Activated naive CD4-positive, alpha-beta T cell treated with anti-CD3 and anti-CD28 coated beads for 36 hours (primary cell): ENCODE measurements at regions of chr4 and their contacts with region 1.

Region 1: GRCh38 chr4:187606581-187606980 is 389.0 kb upstream of the ZFP42 start:
- DNase-seq: peak; percentile 23
- H3K4me3 Mint-ChIP-seq: no peak overlapping the region
- H3K27ac Mint-ChIP-seq: no peak overlapping the region
- H3K4me1 Mint-ChIP-seq: no peaks in the 10 kb centered on the region
- H3K27me3 Mint-ChIP-seq: peaks cover 4% of the 10 kb centered on the region

Region 2: DNA sequence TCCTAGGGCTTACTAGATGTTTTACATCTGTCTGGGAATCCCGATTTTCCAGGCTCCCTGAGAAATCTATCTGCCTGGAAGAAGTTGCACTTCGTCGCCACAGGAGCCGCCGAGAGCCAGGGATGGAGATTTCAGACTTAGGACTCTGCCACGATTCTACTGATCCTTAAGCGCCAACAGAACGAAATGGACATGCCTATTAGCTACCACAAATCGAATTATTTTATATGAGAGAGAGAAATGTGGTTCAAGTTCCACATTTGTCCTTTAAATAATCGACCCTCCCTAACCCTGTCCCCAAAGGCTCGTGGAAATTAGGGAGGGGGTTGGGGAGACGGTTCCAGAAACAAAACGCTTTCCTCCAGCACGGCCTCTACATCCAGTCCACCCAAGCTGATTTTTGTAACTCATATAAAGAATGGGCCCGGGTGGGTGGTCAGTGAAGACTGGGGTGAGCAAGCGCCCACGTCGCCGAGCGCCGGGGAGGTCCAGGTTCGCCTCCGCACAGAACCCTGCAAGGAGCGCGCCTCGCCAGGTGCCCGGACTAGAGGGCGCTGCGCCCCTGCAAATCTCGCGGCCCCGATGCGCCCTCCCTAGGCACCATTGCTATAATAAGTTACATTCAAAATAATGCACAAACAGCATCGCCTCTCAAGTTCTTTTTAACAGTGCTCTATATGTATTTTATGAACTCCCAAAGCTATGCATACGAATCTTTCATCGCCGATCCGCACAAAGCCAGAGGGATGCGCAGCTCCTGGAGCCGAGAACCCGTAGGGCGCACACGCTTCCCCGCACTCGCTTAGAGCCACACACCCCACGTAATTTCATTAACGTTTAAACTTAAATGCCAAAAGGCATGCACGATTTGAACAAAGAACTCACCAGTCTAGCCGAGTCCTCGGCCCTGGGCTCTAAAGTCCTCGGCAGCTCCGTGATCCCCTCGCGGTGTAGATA is 880.8 kb before region 1 on chr4:
- CTCF ChIA-PET with region 1: no interaction called
- intact Hi-C with region 1: loop called (anchors 10 kb)
- DNase-seq: peak; percentile 48
- H3K4me3 Mint-ChIP-seq: peak overlapping the region; percentile 48
- H3K27ac Mint-ChIP-seq: no peak overlapping the region
- H3K4me1 Mint-ChIP-seq: peaks cover 21% of the 10 kb centered on the region
- H3K27me3 Mint-ChIP-seq: peaks cover 60% of the 10 kb centered on the region

Region 3: DNA sequence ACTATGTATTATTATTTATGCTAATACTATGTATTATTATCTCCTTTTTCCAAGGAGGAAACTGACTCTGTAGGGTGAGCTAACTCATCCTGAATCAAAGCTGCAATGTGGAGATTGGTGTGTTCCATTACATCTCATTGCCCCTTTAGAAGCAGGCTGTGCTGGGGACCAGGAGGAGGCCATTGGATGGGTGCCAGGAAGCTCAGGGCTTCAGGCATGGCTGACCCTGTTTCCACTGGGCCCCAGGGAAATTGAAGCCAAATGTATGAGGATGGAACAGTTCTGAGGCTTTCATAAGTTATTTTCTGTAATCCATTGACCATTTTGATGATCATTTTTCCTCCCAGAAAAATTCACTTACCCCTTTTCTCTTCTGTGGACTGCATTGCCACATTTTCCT is 29.8 kb before region 1 on chr4:
- CTCF ChIA-PET with region 1: no interaction called
- intact Hi-C with region 1: no loop called
- DNase-seq: no peak
- H3K4me3 Mint-ChIP-seq: no peak overlapping the region
- H3K27ac Mint-ChIP-seq: no peak overlapping the region
- H3K4me1 Mint-ChIP-seq: no peaks in the 10 kb centered on the region
- H3K27me3 Mint-ChIP-seq: no peaks in the 10 kb centered on the region

Region 4: GRCh38 chr4:187849556-187850225 is 243.1 kb after region 1 on chr4:
- CTCF ChIA-PET with region 1: no interaction called
- intact Hi-C with region 1: no loop called
- DNase-seq: no peak
- H3K4me3 Mint-ChIP-seq: no peak overlapping the region
- H3K27ac Mint-ChIP-seq: no peak overlapping the region
- H3K4me1 Mint-ChIP-seq: no peaks in the 10 kb centered on the region
- H3K27me3 Mint-ChIP-seq: no peaks in the 10 kb centered on the region

Region 5: DNA sequence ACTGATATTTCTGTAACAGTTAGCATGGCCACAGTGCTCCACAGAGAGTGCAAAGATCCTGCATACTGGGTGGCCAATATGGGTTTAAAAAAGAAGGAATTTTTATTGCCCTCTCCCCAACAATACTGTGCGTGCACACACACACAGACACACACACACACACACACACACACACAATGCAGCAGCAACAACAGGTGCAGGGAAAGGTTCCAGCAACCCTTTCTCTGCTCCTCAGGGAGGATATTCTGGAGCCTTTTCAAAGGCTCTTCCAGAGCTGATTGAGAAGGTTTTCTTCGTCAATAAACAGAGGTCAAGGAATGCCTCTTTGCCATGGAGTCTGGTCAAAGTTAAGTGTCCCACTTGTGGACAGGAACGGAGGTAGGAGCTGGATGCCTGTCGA is 304.2 kb after region 1 on chr4:
- CTCF ChIA-PET with region 1: no interaction called
- intact Hi-C with region 1: no loop called
- DNase-seq: no peak
- H3K4me3 Mint-ChIP-seq: no peak overlapping the region
- H3K27ac Mint-ChIP-seq: no peak overlapping the region
- H3K4me1 Mint-ChIP-seq: no peaks in the 10 kb centered on the region
- H3K27me3 Mint-ChIP-seq: no peaks in the 10 kb centered on the region

Region 6: GRCh38 chr4:187929024-187929423 is 322.4 kb after region 1 on chr4:
- CTCF ChIA-PET with region 1: no interaction called
- intact Hi-C with region 1: no loop called
- DNase-seq: no peak
- H3K4me3 Mint-ChIP-seq: no peak overlapping the region
- H3K27ac Mint-ChIP-seq: no peak overlapping the region
- H3K4me1 Mint-ChIP-seq: no peaks in the 10 kb centered on the region
- H3K27me3 Mint-ChIP-seq: peaks cover 2% of the 10 kb centered on the region

Region 7: DNA sequence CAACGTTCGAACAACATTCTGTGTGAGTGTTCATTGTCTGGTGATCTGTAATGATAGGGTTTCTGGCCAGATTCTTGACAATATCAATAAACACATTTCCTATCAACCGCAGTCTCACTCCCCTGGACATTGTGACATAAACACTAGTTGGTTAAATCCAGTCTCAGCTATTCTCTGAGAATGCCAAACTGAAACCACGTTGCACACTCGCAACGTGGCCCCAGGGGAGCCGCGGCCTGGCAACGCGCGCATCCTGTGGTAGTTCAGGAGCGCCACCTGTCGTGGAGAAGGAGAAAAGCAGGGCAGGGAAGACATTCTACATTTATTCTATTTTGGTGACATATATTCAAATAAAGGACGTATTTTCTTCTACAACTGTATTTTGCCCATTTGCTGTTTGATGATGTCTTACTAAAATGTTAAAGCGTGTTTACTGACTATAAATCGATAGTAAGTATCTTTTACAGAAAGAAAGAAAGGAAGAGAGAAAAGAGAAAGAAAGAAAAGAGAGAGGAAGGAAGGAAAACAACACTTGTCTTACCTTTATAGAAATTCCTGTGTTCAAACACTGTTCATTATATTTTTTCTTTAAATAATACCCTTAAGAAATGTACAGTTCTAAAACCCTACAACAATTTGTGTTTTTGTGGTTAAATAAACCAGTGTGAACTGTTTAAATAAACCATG is 1595.7 kb after region 1 on chr4:
- CTCF ChIA-PET with region 1: no interaction called
- intact Hi-C with region 1: loop called (anchors 2 kb)
- DNase-seq: peak; percentile 29
- H3K4me3 Mint-ChIP-seq: no peak overlapping the region
- H3K27ac Mint-ChIP-seq: no peak overlapping the region
- H3K4me1 Mint-ChIP-seq: peaks cover 4% of the 10 kb centered on the region
- H3K27me3 Mint-ChIP-seq: peaks cover 8% of the 10 kb centered on the region